ENCODE measurements at regions of chr19 and their contacts with region 1.

Region 1: DNA sequence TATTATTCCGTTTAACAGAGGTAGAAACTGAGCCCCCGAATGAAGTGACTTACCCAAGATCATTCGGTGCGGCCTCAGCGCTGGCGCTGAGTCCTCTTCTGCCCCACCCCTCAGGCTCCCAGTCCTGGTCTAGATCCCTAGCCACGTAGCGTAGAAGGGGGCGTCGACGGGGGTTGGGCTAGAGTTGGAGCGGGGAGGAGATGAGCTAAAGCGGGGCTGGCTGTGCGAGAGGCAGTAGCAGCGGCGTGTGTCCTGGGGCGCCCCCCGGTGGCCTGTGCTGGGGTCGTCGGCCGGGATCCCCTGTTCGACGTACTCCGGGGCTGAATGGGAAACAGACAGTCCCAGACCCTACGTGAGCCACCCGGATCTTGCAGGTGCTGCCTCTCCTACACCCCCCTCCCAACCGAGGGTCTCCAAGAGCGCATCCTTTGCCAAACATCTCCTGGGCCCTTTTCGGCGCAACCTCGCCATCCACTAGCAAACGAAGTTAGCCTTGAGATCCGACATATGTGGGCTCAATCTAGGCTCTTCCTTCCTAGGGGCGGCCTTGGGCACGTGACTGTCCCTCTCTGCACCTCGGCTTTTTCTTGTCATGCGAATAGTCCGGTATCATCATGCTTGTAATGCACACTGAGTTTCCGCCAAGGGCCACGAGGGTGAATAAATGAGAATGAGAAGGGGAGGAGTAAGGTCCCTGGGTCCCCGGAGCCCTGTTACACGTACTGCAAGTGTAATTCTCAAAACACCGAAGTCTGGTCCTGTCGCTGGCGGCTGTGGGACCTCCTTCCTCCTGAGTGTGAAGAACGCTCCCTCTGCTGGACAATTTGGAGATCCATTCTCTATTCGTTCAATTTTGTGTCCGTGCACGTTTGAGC is 47.7 kb downstream of the CYP4F22 start:
- DNase-seq: peak; percentile 92
- H3K4me3 ChIP-seq: peak overlapping the region in 1 of 2 donors; percentile 19
- H3K27ac ChIP-seq: peak overlapping the region; percentile 54 to 70
- H3K4me1 ChIP-seq: no peaks in the 10 kb centered on the region
- H3K27me3 ChIP-seq: no peaks in the 10 kb centered on the region
- CTCF ChIP-seq: peak; percentile 64 to 91 (median 80)
- POLR2A ChIP-seq: no peak

Region 2: GRCh38 chr19:15091901-15092753 is 463.9 kb before region 1 on chr19:
- intact Hi-C with region 1: loop called (anchors 5 kb)
- DNase-seq: peak; percentile 59
- H3K4me3 ChIP-seq: no peak overlapping the region
- H3K27ac ChIP-seq: no peak overlapping the region
- H3K4me1 ChIP-seq: no peaks in the 10 kb centered on the region
- H3K27me3 ChIP-seq: no peaks in the 10 kb centered on the region
- CTCF ChIP-seq: peak; percentile 40 to 54 (median 51)
- POLR2A ChIP-seq: no peak

Region 3: DNA sequence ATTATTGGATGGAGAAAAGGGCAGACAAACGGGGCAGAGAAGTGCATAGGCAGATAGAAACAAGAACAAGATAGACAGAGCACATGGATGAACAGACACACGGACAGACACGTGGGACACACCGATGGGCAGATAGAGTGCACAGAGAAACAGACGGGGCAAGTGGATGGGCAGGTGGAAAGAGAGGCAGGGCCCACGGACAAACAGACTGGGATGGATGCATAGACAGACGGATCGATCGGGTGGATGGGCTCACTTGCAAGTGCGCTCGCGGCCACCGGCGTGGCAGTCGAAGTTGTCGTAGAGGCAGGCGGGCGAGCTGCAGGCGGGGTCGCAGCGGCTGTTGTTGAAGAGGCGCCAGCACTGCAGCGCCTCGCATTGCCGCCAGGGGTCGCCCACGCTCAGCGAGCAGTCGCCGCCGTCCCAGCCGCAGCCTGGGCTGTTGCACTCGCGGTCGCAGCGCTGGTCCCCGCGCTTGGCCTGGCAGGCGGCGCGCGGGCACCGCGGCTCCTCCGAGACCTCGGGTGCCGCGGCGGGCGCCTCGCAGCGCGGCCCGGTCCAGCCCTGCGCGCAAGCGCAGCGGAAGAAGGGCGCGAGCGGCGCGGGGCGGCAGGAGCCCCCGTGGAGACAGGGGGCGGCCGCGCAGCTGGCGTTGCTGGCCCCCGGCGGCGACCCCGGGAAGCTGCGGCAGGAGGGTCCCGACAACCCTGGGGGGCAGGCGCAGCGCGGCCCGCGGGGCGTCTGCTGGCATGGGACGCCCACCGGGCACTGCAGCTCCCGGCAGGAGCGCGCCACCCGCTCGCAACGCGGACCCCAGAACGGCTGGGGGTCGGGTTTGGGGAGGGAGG is 378.5 kb before region 1 on chr19:
- intact Hi-C with region 1: loop called (anchors 2 kb)
- DNase-seq: peak; percentile 65
- H3K4me3 ChIP-seq: peak overlapping the region; percentile 7 to 28
- H3K27ac ChIP-seq: no peak overlapping the region
- H3K4me1 ChIP-seq: no peaks in the 10 kb centered on the region
- H3K27me3 ChIP-seq: no peaks in the 10 kb centered on the region
- CTCF ChIP-seq: peak; percentile 94 to 99 (median 96)
- POLR2A ChIP-seq: no peak

Region 4: DNA sequence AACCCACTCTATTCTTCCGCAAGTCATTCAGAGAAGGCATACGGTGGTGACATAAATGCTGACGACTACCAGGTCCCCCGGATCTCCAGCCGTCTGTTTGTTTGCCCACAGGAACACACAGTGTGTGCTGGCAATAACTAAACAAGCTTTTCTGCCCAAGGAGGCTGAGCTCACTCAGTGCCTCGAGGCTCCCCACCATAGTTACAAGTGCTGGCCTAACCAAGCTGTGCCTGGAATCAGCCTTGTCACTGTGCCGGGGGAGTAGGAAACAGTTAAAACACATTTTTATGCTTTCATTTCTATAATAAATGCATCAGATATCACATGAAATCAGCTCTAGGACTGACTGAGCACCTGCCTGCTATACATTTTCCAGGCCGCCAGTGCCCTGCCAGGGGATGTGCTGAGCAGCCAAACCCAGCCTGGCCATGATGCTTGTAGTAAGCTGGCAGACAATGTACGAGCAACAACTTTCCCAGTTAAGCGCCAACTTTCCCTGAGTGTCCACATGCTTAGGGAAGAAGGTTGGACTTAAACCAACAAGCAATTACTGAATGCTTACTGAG is 251.8 kb before region 1 on chr19:
- intact Hi-C with region 1: no loop called
- DNase-seq: no peak
- H3K4me3 ChIP-seq: no peak overlapping the region
- H3K27ac ChIP-seq: peak overlapping the region; percentile 12 to 46
- H3K4me1 ChIP-seq: peaks cover 25% of the 10 kb centered on the region
- H3K27me3 ChIP-seq: no peaks in the 10 kb centered on the region
- CTCF ChIP-seq: no peak
- POLR2A ChIP-seq: no peak

Region 5: GRCh38 chr19:15449620-15450527 is 106.1 kb before region 1 on chr19 and contains the start of gene WIZ:
- intact Hi-C with region 1: loop called (anchors 10 kb)
- DNase-seq: peak; percentile 61
- H3K4me3 ChIP-seq: peak within 1 kb of the TSS; percentile 59 to 65
- H3K27ac ChIP-seq: peak within 1 kb of the TSS; percentile 62 to 73
- H3K4me1 ChIP-seq: peaks cover 6% of the 10 kb centered on the region
- H3K27me3 ChIP-seq: no peaks in the 10 kb centered on the region
- CTCF ChIP-seq: no peak
- POLR2A ChIP-seq: no peak
- total RNA-seq, gene WIZ: 55.9 to 93.3 TPM

Region 6: DNA sequence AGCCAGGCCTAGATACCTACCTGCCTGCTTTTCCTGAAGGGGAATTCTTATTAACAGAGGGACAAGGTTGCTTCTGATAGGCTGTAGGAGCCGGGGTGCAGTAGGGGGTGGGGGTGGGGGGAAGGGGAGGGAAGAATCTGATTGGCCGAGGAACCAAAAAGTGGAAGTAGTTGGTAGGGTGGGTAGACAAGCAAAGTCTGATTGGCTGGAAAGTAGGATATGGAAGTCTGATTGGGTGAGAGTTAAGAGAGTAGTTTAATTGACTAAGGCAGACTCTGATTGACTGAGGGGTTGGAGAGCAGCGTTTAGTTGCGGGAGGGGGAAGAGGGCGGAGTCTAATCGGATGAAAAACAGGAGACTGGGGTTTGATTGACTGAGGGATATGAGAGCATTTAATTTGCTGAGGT is 57.1 kb before region 1 on chr19:
- intact Hi-C with region 1: no loop called
- DNase-seq: no peak
- H3K4me3 ChIP-seq: no peak overlapping the region
- H3K27ac ChIP-seq: peak overlapping the region in 1 of 2 donors; percentile 30
- H3K4me1 ChIP-seq: no peaks in the 10 kb centered on the region
- H3K27me3 ChIP-seq: no peaks in the 10 kb centered on the region
- CTCF ChIP-seq: no peak
- POLR2A ChIP-seq: no peak

Region 7: DNA sequence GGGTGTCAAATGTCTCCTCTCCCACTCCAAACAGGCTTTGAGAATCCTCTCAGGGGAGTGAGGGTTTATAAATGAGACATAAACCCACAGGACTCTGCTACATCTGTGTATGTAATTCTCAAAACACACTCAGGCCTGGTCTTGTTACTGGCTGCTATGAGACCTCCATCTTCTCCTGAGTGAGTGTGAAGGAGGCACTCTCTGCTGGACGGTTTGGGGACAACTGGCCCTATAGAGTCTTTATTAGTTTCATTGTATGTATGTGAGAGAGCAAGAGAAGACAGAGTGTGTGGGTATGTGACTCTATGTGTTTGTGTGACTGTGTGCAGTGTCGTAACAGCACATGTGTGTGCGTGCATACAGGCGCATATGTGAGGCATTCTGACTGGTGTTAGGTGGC is 107.3 kb after region 1 on chr19:
- intact Hi-C with region 1: no loop called
- DNase-seq: no peak
- H3K4me3 ChIP-seq: no peak overlapping the region
- H3K27ac ChIP-seq: no peak overlapping the region
- H3K4me1 ChIP-seq: no peaks in the 10 kb centered on the region
- H3K27me3 ChIP-seq: no peaks in the 10 kb centered on the region
- CTCF ChIP-seq: no peak
- POLR2A ChIP-seq: no peak

Measured in prostate gland (tissue), 2 donors.